CD8-positive, alpha-beta memory T cell (primary cell): ENCODE measurements at regions of chr2 and their contacts with region 1.

Region 1: DNA sequence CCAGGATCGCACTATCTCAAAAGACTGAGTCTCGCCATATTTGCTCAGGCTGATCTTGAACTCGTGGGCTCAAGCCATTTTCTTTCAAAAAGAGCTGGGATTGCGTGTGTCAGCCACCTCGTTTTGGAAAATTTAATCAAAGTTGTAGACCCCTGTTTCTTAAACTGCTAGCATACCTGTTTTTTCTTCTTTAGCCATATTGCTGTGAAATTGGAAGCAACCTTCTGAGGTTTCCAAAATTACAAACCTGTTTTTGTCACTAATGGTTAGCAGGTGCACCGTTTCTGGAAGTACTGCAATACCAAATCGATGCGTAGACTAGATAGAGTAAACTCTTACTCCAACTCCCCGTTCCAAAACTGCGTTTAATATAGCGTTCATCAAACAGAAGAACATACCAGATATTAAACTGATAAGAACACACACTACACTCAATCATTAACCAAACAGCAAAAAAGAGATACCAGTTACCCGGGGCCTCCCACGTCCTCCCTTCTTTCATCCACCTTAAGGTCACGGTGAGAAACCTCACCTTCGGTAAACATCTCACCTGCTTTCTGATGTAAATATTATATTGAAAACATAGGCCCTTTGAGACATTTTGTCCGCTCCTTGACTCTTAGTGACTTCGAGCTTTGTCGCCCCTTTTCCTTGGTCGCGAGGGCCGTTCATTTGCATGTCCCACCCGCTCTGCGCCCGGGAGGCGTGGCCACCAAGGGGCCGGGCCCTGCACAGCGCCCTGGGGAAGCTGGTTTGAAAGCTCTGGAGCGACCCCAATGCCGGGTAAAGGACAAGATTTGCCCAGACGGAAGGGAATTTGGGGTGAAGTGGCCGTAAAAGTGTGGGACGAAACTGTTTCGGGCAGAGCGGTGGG is at the start of gene RNU2-63P:
- DNase-seq: peak; percentile 65 to 87 (median 81)
- H3K4me3 ChIP-seq: peak within 1 kb of the TSS; percentile 81
- H3K4me3 Mint-ChIP-seq: peak within 1 kb of the TSS; percentile 89 to 100 (median 99)
- H3K27ac ChIP-seq: peak within 1 kb of the TSS; percentile 95
- H3K27ac Mint-ChIP-seq: peak within 1 kb of the TSS; percentile 96 to 100 (median 100)
- H3K4me1 ChIP-seq: peaks cover 7% of the 10 kb centered on the region
- H3K4me1 Mint-ChIP-seq: peaks cover 18 to 34% (median 32%) of the 10 kb centered on the region in 3 donors
- H3K27me3 ChIP-seq: no peaks in the 10 kb centered on the region
- H3K27me3 Mint-ChIP-seq: peaks cover 0 to 2% of the 10 kb centered on the region in 2 donors
- total RNA-seq, gene RNU2-63P: 35.8 to 42.7 TPM

Region 2: DNA sequence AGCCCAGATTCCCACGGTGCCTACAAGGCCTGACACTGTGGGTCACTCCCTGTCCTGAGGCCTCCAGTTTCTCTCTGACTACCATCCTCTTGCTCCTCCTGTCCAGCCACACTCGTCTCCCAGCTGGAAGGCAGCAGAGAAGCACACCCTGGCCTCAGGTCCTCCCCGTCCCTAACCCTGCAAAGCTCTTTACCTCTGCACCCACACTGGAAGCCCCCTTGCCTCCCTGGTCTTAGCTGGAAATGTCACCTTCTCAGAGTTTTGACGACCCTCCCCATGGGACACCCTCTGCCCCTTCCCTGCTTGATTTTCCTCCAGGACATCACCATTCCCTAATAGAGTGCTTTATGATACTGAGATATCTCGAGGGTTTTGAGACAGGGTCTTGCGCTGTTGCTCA is 10.5 kb before region 1 on chr2:
- CTCF ChIA-PET with region 1: interaction called, 10 read pairs
- POLR2A ChIA-PET with region 1: no interaction called
- DNase-seq: no peak
- H3K4me3 ChIP-seq: no peak overlapping the region
- H3K4me3 Mint-ChIP-seq: no peak overlapping the region
- H3K27ac ChIP-seq: no peak overlapping the region
- H3K27ac Mint-ChIP-seq: no peak overlapping the region
- H3K4me1 ChIP-seq: peaks cover 5% of the 10 kb centered on the region
- H3K4me1 Mint-ChIP-seq: peaks cover 5 to 6% (median 6%) of the 10 kb centered on the region in 3 donors
- H3K27me3 ChIP-seq: no peaks in the 10 kb centered on the region
- H3K27me3 Mint-ChIP-seq: peaks cover 0 to 5% of the 10 kb centered on the region in 2 donors

Region 3: GRCh38 chr2:88265349-88266303 is 249.3 kb after region 1 on chr2:
- CTCF ChIA-PET with region 1: no interaction called
- POLR2A ChIA-PET with region 1: no interaction called
- DNase-seq: no peak
- H3K4me3 ChIP-seq: no peak overlapping the region
- H3K4me3 Mint-ChIP-seq: peak overlapping the region in 4 of 7 donors; percentile 20 to 52 (median 34)
- H3K27ac ChIP-seq: no peak overlapping the region
- H3K27ac Mint-ChIP-seq: peak overlapping the region in 7 of 8 donors; percentile 20 to 83 (median 67)
- H3K4me1 ChIP-seq: peaks cover 5% of the 10 kb centered on the region
- H3K4me1 Mint-ChIP-seq: peaks cover 12 to 24% (median 17%) of the 10 kb centered on the region in 3 donors
- H3K27me3 ChIP-seq: no peaks in the 10 kb centered on the region
- H3K27me3 Mint-ChIP-seq: peaks cover 5 to 15% of the 10 kb centered on the region in 2 donors

Region 4: DNA sequence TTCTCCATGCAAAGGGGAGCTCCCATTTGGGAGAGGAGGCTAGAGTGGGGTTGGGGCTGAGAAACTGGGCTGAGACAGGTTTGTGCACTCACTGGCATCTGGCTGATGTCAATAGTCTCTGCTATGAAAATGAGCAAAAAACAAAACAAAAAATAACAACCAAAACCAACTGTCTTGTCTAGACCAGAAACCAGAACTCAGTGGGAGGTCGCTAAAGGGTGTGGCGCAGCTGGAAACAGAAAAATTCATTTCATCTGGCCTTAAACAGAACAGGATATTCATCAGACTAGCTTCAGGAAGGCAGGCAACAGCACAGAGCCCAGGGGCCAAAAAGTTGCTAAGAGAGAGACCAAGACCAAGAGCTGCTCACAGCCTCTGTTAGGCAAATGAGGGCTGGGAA is 279.9 kb after region 1 on chr2:
- CTCF ChIA-PET with region 1: no interaction called
- POLR2A ChIA-PET with region 1: no interaction called
- DNase-seq: no peak
- H3K4me3 ChIP-seq: no peak overlapping the region
- H3K4me3 Mint-ChIP-seq: no peak overlapping the region
- H3K27ac ChIP-seq: no peak overlapping the region
- H3K27ac Mint-ChIP-seq: no peak overlapping the region
- H3K4me1 ChIP-seq: no peaks in the 10 kb centered on the region
- H3K4me1 Mint-ChIP-seq: peaks cover 0 to 2% (median 0%) of the 10 kb centered on the region in 3 donors
- H3K27me3 ChIP-seq: no peaks in the 10 kb centered on the region
- H3K27me3 Mint-ChIP-seq: peaks cover 0 to 5% of the 10 kb centered on the region in 2 donors